CD4-positive, alpha-beta memory T cell (primary cell): ENCODE measurements at regions of chr2 and their contacts with region 1.

Region 1: DNA sequence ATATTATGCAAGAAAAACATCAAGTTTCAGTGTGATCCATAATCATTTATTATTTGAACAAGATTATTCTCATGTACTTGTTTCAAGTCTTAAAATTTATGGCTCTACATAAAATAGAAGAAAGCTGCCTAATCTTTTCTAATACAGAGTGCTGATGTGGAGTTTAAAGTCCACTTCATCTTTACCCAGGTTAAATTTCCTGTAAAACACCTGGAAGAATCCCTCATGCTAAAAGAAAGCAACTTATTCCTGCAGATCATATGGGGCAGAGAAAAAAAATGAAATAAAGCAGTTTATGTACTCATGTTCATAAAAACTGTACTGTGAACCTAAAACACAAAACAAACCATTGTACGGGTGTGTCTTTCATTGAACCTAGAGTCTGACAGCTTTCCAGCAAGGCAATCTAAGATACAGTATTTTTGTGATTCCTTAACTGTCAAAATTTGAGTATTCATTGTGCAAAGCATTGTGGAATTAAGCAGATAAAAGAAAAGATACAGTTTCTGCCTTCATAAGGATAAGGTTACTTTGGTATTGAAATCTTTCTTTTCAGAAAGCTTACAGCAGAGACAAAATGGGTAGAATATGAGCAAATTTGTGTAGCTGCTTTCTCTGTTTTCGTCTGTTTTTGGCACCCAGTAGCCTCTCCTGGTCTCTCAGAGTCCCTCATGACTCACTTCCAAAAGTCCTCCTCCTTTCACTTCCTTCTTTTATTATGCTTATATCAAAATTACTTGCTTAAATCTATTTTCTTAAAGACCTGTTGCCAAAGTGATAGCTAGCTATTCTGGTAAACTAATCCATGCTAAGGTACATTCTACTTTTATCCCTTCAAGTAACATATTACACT is 26.9 kb upstream of the GLS start:
- DNase-seq: no peak
- H3K4me3 ChIP-seq: no peak overlapping the region
- H3K4me3 Mint-ChIP-seq: no peak overlapping the region
- H3K27ac ChIP-seq: no peak overlapping the region
- H3K27ac Mint-ChIP-seq: no peak overlapping the region
- H3K4me1 ChIP-seq: no peaks in the 10 kb centered on the region
- H3K4me1 Mint-ChIP-seq: peaks cover 0 to 2% (median 0%) of the 10 kb centered on the region in 4 donors
- H3K27me3 ChIP-seq: no peaks in the 10 kb centered on the region
- H3K27me3 Mint-ChIP-seq: peaks cover 0 to 1% of the 10 kb centered on the region in 2 donors

Region 2: DNA sequence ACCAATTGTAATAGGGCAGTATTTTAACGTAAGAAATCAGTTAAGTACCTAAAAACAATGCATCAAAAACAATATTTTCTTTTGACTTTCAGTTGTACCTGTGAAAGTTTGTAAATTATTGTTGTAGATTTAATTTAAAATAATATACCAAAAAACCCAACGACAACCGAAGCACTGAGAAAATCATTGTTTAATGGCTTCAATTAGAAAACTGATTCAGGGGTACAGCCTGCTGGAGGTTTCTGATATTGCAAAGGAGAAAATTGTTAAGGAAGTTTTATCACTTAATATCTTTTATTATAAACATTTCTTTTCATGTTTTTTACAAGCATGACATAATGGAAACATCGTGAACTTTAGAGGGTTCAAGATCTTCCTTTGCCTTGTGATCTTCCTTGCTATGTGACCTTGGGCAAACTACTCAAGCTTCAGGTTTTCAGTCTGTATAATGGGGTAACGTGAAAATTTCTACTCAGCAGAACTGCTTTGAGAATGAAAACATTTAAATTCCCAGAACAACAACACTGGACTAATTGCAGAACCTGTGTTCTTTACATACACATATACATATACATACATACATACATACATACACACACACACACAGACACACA is 49.5 kb before region 1 on chr2:
- CTCF ChIA-PET with region 1: no interaction called
- POLR2A ChIA-PET with region 1: no interaction called
- intact Hi-C with region 1: no loop called
- DNase-seq: peak in 3 of 5 donors; percentile 4 to 23 (median 17)
- H3K4me3 ChIP-seq: no peak overlapping the region
- H3K4me3 Mint-ChIP-seq: no peak overlapping the region
- H3K27ac ChIP-seq: no peak overlapping the region
- H3K27ac Mint-ChIP-seq: no peak overlapping the region
- H3K4me1 ChIP-seq: no peaks in the 10 kb centered on the region
- H3K4me1 Mint-ChIP-seq: no peaks in the 10 kb centered on the region
- H3K27me3 ChIP-seq: no peaks in the 10 kb centered on the region
- H3K27me3 Mint-ChIP-seq: no peaks in the 10 kb centered on the region

Region 3: GRCh38 chr2:190835303-190835930 is 18.3 kb before region 1 on chr2:
- CTCF ChIA-PET with region 1: interaction called, 12 read pairs
- POLR2A ChIA-PET with region 1: no interaction called
- intact Hi-C with region 1: no loop called
- DNase-seq: no peak
- H3K4me3 ChIP-seq: no peak overlapping the region
- H3K4me3 Mint-ChIP-seq: no peak overlapping the region
- H3K27ac ChIP-seq: no peak overlapping the region
- H3K27ac Mint-ChIP-seq: no peak overlapping the region
- H3K4me1 ChIP-seq: no peaks in the 10 kb centered on the region
- H3K4me1 Mint-ChIP-seq: no peaks in the 10 kb centered on the region
- H3K27me3 ChIP-seq: no peaks in the 10 kb centered on the region
- H3K27me3 Mint-ChIP-seq: peaks cover 0 to 3% of the 10 kb centered on the region in 2 donors

Region 4: DNA sequence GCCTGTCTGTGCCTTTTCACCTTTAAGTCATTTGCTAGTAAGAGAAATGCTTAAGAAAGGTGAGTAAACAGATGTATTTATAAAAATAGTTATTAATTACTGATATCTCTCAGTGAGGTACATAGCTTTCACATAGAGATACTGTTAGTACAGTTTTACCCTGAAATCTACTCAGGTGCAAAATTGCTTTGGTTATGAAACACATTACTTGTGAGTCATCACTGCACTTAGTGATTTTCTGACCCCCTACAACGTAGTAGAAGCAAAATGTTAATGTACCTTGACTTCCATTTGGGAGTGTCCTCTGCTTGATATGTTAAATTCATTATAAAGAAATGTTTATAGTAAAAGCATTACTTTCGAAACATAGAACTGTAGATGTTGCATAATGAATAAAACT is 33.3 kb after region 1 on chr2:
- CTCF ChIA-PET with region 1: interaction called, 62 read pairs
- POLR2A ChIA-PET with region 1: interaction called, 54 read pairs
- intact Hi-C with region 1: no loop called
- DNase-seq: no peak
- H3K4me3 ChIP-seq: no peak overlapping the region
- H3K4me3 Mint-ChIP-seq: peak overlapping the region in 4 of 8 donors; percentile 57 to 79 (median 76)
- H3K27ac ChIP-seq: no peak overlapping the region
- H3K27ac Mint-ChIP-seq: peak overlapping the region in 2 of 7 donors; percentile 12 to 77
- H3K4me1 ChIP-seq: peaks cover 92% of the 10 kb centered on the region
- H3K4me1 Mint-ChIP-seq: peaks cover 53 to 85% (median 71%) of the 10 kb centered on the region in 4 donors
- H3K27me3 ChIP-seq: no peaks in the 10 kb centered on the region
- H3K27me3 Mint-ChIP-seq: no peaks in the 10 kb centered on the region

Region 5: DNA sequence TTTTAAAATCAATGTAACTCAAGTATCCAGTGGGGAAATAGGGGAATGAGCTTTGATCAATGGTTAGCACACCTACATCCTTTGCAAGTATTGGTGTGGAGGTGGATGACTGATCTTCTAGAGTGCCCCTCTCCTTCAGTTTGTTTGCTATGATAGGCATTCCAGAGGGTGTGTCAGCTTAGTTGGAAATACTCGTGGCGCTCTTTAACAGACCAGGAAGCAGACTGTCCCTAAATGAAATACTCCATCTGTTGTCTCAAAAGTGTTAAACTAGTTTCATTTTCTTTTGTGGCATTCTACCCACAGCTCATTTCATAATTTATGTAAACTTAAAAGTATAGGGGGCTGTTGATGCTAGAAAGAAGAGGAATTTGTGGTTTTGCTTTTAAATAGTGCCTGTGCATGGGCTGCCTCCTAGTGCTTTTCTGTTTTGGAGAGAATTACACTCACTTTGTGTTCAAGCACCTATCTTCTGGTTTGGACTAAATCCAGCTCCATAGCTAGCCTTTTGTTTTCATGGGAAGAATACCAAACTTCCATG is 94.0 kb after region 1 on chr2:
- CTCF ChIA-PET with region 1: interaction called, 31 read pairs
- POLR2A ChIA-PET with region 1: interaction called, 4 read pairs
- intact Hi-C with region 1: loop called (anchors 5 kb)
- DNase-seq: peak in 4 of 5 donors; percentile 26 to 58 (median 48)
- H3K4me3 ChIP-seq: no peak overlapping the region
- H3K4me3 Mint-ChIP-seq: peak overlapping the region in 7 of 8 donors; percentile 13 to 77 (median 52)
- H3K27ac ChIP-seq: peak overlapping the region; percentile 14
- H3K27ac Mint-ChIP-seq: peak overlapping the region in 6 of 7 donors; percentile 66 to 91 (median 86)
- H3K4me1 ChIP-seq: peaks cover 29% of the 10 kb centered on the region
- H3K4me1 Mint-ChIP-seq: peaks cover 19 to 24% (median 20%) of the 10 kb centered on the region in 4 donors
- H3K27me3 ChIP-seq: no peaks in the 10 kb centered on the region
- H3K27me3 Mint-ChIP-seq: no peaks in the 10 kb centered on the region

Region 6: GRCh38 chr2:190961918-190962487 is 108.2 kb after region 1 on chr2:
- CTCF ChIA-PET with region 1: interaction called, 22 read pairs
- POLR2A ChIA-PET with region 1: no interaction called
- intact Hi-C with region 1: no loop called
- DNase-seq: no peak
- H3K4me3 ChIP-seq: no peak overlapping the region
- H3K4me3 Mint-ChIP-seq: no peak overlapping the region
- H3K27ac ChIP-seq: no peak overlapping the region
- H3K27ac Mint-ChIP-seq: peak overlapping the region in 5 of 7 donors; percentile 7 to 87 (median 42)
- H3K4me1 ChIP-seq: no peaks in the 10 kb centered on the region
- H3K4me1 Mint-ChIP-seq: peaks cover 24 to 44% (median 34%) of the 10 kb centered on the region in 4 donors
- H3K27me3 ChIP-seq: no peaks in the 10 kb centered on the region
- H3K27me3 Mint-ChIP-seq: no peaks in the 10 kb centered on the region

Region 7: GRCh38 chr2:190996338-190996946 is 142.7 kb after region 1 on chr2:
- CTCF ChIA-PET with region 1: interaction called, 6 read pairs
- POLR2A ChIA-PET with region 1: no interaction called
- intact Hi-C with region 1: loop called (anchors 1 kb)
- DNase-seq: peak in 4 of 5 donors; percentile 21 to 40 (median 37)
- H3K4me3 ChIP-seq: no peak overlapping the region
- H3K4me3 Mint-ChIP-seq: no peak overlapping the region
- H3K27ac ChIP-seq: no peak overlapping the region
- H3K27ac Mint-ChIP-seq: peak overlapping the region; percentile 75 to 92 (median 83)
- H3K4me1 ChIP-seq: peaks cover 11% of the 10 kb centered on the region
- H3K4me1 Mint-ChIP-seq: peaks cover 32 to 63% (median 36%) of the 10 kb centered on the region in 4 donors
- H3K27me3 ChIP-seq: no peaks in the 10 kb centered on the region
- H3K27me3 Mint-ChIP-seq: no peaks in the 10 kb centered on the region

Region 8: GRCh38 chr2:191030521-191031154 is 176.9 kb after region 1 on chr2:
- CTCF ChIA-PET with region 1: interaction called, 16 read pairs
- POLR2A ChIA-PET with region 1: no interaction called
- intact Hi-C with region 1: loop called (anchors 1 kb)
- DNase-seq: peak; percentile 52 to 69 (median 56)
- H3K4me3 ChIP-seq: no peak overlapping the region
- H3K4me3 Mint-ChIP-seq: peak overlapping the region in 4 of 8 donors; percentile 1 to 47 (median 7)
- H3K27ac ChIP-seq: peak overlapping the region; percentile 21
- H3K27ac Mint-ChIP-seq: peak overlapping the region; percentile 15 to 84 (median 44)
- H3K4me1 ChIP-seq: peaks cover 34% of the 10 kb centered on the region
- H3K4me1 Mint-ChIP-seq: peaks cover 21 to 37% (median 30%) of the 10 kb centered on the region in 4 donors
- H3K27me3 ChIP-seq: no peaks in the 10 kb centered on the region
- H3K27me3 Mint-ChIP-seq: no peaks in the 10 kb centered on the region

Region 9: DNA sequence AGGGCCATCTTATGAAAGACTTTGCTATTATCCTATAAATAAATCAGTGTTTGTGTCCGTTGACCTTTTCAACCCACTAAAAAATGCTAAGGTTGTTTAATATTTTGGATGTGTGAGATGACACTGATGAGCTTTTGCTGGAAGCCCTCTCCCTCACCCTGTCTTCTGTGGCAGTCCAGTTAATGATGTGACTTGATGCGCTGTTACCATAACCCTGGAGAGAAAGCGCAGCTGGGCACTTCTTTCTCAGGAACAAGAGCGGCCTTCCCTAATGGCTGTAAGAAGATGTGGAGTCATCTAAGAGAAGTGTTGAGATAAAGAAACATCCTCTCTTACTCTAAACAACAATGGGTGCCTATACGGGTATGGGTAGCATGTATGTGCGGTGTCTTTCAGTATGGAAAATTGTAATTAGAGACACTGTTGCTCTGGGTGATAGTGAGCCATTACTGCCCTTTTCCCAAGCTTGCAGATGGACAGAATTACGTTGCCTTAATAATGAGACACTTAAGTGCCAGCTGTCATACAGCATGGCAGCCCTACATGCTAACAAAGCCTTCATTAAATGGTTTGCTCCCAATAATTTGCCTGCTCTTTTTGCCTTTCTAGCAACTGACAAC is 658.6 kb after region 1 on chr2:
- CTCF ChIA-PET with region 1: no interaction called
- POLR2A ChIA-PET with region 1: no interaction called
- intact Hi-C with region 1: no loop called
- DNase-seq: no peak
- H3K4me3 ChIP-seq: no peak overlapping the region
- H3K4me3 Mint-ChIP-seq: no peak overlapping the region
- H3K27ac ChIP-seq: no peak overlapping the region
- H3K27ac Mint-ChIP-seq: no peak overlapping the region
- H3K4me1 ChIP-seq: no peaks in the 10 kb centered on the region
- H3K4me1 Mint-ChIP-seq: no peaks in the 10 kb centered on the region
- H3K27me3 ChIP-seq: no peaks in the 10 kb centered on the region
- H3K27me3 Mint-ChIP-seq: no peaks in the 10 kb centered on the region